AG04449 (cell line): ENCODE measurements at regions of chr19 and their contacts with region 1.

Region 1: GRCh38 chr19:40549007-40549708 is 27.5 kb upstream of the SHKBP1 start:
- DNase-seq: no peak
- H3K4me3 ChIP-seq: no peak overlapping the region
- CTCF ChIP-seq: peak; percentile 67

Region 2: GRCh38 chr19:40035996-40036395 is 513.2 kb before region 1 on chr19:
- CTCF ChIA-PET with region 1: no interaction called
- POLR2A ChIA-PET with region 1: no interaction called
- DNase-seq: no peak
- H3K4me3 ChIP-seq: no peak overlapping the region
- CTCF ChIP-seq: no peak

Region 3: GRCh38 chr19:40529093-40529954 is 19.8 kb before region 1 on chr19:
- CTCF ChIA-PET with region 1: interaction called, 17 read pairs
- POLR2A ChIA-PET with region 1: no interaction called
- DNase-seq: no peak
- H3K4me3 ChIP-seq: peak overlapping the region; percentile 54
- CTCF ChIP-seq: peak; percentile 97

Region 4: DNA sequence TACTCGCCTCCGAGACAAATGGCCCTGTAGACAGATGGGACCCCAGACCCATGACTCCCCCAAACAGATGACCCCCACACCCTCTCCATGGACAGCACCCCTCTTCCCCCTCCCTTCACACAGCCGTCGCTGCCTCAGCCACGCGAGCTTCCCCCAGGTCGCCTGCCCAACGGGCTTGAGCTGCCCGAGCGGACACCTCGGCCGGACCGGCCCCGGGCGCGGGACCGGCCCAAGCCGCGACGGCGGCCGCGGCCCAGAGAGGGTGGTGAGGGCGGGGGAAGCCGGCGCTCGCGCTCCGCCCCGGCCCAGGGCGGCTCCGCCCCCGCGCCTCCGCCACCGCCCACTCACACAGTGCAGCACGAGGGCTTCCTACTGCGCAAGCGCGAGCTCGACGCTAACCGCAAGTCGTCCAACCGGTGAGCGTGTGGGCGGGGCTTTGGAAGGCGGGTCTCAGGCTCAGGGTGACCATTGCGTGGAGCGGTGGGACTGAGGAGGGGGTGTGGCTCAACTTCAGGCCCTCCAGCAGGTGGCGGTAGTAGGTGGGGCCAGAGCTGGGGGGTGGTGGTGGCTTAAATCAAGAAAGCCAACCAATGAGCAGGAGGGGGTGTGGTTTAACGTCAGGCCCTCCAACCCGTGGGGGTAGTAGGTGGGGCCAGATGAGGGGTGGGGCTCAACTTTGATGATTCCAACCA is 21.3 kb after region 1 on chr19:
- CTCF ChIA-PET with region 1: interaction called, 10 read pairs
- POLR2A ChIA-PET with region 1: no interaction called
- DNase-seq: peak; percentile 95
- H3K4me3 ChIP-seq: peak overlapping the region; percentile 79
- CTCF ChIP-seq: no peak

Region 5: DNA sequence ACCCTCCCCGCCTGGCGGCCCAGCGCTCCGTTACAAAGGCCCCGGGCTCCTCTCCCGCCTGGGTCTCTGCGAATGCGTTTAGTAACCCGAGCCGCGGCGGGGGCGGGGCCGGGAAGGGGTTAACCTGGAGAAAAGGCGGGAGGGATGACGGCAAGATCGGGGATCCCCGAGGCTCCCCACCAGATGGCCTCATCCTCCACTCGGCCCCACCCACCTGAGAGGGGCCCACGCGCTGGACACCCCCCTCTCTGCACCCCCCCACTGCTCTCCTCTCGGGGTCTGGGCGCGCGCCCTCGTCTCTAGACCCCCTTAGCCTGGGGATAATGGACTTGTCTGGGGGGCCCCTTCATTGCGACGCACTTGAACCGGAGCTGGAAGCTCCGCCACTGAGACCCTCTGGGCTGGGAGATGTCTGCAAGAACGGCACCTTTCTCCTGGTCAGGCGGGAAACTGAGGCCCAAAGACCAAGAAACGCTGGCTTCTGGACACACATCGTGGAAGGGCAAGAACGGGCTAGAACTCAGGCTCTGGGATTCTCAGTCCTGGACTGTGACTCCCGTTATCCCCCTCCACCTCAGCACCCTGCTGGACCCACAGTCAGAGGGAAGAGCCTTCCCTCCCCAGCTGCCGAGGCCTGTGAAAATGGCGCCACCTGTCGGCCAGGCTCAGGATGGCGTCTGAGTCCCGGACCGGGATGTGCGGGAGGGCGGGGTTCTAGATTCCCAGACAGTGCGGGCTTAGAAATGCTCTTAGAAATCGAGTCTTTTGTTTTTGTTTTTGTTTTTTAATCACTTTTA is 49.2 kb after region 1 on chr19:
- CTCF ChIA-PET with region 1: interaction called, 89 read pairs
- POLR2A ChIA-PET with region 1: no interaction called
- DNase-seq: no peak
- H3K4me3 ChIP-seq: peak overlapping the region; percentile 65
- CTCF ChIP-seq: peak; percentile 97

Region 6: DNA sequence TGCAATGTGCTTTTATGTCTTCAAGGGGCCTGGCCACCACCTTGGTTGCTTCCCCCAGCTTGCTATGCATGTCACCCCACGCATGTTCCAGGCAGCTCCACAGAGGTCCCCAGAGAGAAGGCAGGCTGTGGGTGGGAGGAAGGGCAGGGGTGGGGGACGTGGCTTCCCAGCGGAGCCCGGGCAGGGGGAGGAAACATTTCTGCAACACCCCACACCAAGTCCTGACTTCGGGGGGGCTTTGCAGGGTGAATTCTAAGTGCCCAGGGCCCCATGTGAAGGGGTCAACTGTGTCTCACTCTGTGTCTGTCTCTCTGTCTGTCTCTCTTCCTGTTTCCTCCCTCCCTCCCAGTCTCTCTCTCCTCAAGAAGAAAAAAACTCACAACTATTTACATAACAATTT is 91.6 kb after region 1 on chr19:
- CTCF ChIA-PET with region 1: interaction called, 24 read pairs
- POLR2A ChIA-PET with region 1: no interaction called
- DNase-seq: no peak
- H3K4me3 ChIP-seq: no peak overlapping the region
- CTCF ChIP-seq: no peak